Right ventricle myocardium inferior (tissue), 1 donor: ENCODE measurements at regions of chr15 and their contacts with region 1.

Region 1: DNA sequence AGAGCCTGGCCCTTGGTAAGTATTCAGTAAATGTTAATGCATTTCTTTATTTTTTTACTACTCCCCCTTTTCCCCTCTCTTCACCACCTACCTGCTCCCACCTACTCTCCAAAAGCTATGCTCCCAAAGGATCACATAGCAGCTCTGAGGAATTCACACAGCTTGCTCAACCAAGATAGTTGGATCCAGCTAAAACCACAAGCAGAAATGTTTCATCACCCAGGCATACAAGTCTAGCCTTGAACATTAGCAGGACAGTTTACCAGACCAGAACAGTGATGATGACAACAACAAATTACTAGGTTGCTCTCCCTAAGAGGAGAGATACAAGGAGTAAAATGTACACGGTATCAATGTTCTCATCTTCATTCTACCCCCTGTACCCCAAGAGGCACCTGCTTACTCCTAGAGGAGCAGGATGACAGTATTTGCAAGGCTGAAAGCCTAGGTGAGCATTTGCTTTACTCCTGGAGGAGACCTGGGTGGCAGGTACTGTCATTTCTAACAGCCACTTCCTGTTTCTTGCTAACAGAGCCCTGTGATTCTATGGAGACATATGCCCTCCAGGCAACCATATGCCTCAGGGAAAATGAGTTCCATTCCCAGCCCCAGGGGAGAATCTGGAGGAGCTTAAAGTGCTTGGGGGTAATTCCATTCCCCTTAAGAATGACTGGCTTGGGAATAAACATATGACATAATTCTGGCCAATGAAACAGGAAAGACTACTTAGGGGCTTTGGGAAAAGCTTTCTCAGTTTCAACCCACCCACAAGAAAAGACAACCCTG is 237.5 kb downstream of the NTRK3 start:
- DNase-seq: no peak
- ATAC-seq: no peak

Region 2: GRCh38 chr15:87489902-87490665 is 529.0 kb before region 1 on chr15:
- intact Hi-C with region 1: loop called (anchors 10 kb)
- DNase-seq: no peak
- ATAC-seq: peak; percentile 26

Region 3: GRCh38 chr15:87672309-87673288 is 346.4 kb before region 1 on chr15:
- intact Hi-C with region 1: loop called (anchors 5 kb)
- DNase-seq: no peak
- ATAC-seq: no peak

Region 4: DNA sequence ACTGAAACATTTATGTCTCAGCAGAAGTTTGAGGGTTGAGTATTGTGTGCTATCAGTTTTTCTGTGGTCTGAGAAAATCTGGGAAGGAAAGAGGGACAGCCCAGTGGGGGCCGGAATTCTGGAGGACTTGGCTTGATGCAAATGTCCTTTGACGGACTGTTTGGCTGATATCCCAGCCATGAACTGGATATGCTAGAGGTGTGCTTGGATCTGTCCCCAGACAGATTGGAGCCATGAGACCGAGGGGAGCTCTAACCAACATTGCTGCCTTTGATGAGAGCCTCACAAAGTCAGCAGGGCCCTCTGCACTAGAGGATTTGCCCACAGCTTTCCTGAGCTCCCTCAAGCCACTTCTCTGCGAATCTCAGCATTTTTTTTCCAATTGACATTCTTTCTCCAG is 168.1 kb before region 1 on chr15:
- intact Hi-C with region 1: loop called (anchors 1 kb)
- DNase-seq: no peak
- ATAC-seq: peak; percentile 94

Region 5: GRCh38 chr15:88113496-88114308 is 94.7 kb after region 1 on chr15:
- intact Hi-C with region 1: no loop called
- DNase-seq: no peak
- ATAC-seq: no peak